IMR-90 (cell line): ENCODE measurements at regions of chr4 and their contacts with region 1.

Region 1: DNA sequence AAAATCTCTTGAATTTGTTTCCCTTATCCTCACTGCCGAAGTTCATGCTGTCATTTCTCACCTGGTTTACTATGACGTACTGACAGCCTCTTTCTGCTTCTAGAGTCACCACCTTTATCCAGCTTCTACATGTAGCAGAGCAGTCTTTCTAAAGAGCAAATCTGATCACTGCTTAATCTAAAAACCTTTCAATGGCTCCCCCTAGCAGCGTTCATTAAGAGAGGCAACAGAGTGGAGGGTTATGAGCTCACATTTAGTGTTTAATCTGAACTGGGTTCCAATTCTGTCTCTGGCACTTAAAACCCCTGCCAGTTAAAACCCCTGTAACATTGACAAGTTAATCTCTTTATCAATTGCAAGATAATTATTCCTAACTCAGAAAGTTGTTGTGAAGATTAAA is 4.4 kb downstream of the RBPJ start:
- DNase-seq: peak; percentile 67
- ATAC-seq: no peak
- H3K4me3 ChIP-seq: no peak overlapping the region
- H3K27ac ChIP-seq: no peak overlapping the region
- H3K4me1 ChIP-seq: peaks cover 9% of the 10 kb centered on the region
- H3K27me3 ChIP-seq: no peaks in the 10 kb centered on the region
- CTCF ChIP-seq: peak; percentile 61
- POLR2A ChIP-seq: no peak
- RAD21 ChIP-seq: peak; percentile 65

Region 2: DNA sequence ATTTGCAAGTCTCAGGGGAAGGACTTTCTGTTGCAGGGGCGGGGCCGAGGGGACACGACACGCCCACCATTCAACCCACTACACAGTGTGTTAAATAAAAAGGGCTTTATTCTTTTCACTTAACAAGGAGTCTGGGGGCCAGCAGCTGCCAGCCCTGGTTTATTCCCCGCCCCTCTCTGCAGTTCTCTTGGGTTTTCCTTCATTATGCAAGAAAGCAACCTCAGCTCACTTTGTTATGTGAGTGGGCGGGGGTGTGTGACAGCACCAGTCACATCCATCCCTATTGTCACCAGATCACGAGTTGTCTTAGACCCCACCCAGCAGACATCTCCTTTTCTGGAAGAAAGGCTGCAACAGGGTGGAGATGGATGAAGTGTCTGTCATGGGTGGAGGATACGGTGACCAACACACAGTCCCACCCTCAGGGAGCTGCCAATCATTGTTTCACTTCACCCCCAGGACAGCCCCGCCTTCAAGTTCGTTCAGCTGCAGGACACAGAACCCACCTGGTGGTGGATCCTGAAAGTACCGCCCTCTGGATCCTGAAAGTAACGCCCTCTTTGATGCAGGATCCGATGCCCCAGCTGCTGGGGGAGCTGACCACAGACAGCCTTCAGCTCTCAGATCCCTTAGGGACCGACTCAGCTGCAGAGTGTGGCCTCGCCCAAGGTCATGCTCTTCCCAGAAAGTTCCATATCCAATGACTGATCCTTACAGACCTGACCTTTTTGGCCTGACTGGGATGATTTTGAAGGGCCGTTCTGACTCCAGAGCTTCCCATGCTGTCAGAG is 331.6 kb before region 1 on chr4:
- CTCF ChIA-PET with region 1: no interaction called
- POLR2A ChIA-PET with region 1: no interaction called
- dilution Hi-C with region 1: no loop called
- in situ Hi-C with region 1: no loop called
- intact Hi-C with region 1: loop called (anchors 1 kb)
- DNase-seq: no peak
- ATAC-seq: no peak
- H3K4me3 ChIP-seq: no peak overlapping the region
- H3K27ac ChIP-seq: no peak overlapping the region
- H3K4me1 ChIP-seq: 0 out of 2 replicates have a peak, but pooled peaks cover 2% of the 10 kb centered on the region
- H3K27me3 ChIP-seq: no peaks in the 10 kb centered on the region
- CTCF ChIP-seq: 0 out of 2 replicates have a peak, but pooled peaks have one; percentile 8
- POLR2A ChIP-seq: no peak
- RAD21 ChIP-seq: no peak

Region 3: DNA sequence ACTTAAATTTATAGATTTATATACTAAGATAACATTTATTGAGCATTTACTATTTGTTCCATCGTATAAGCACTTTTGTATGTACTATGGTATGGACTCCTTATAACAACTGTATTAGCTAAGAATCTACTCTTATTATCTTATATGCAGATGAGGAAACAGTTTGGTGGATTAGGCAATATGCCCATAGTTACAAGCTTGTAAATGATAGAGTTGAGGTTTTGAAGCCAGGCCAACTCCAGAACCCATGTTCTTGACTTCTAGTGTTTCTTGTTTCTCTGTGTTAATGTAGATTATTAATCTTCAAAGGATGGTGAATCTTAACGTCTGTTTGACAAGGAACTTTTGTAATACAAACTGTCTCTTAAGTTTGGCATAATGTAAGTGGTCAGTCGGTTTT is 606.8 kb after region 1 on chr4:
- CTCF ChIA-PET with region 1: no interaction called
- POLR2A ChIA-PET with region 1: no interaction called
- dilution Hi-C with region 1: no loop called
- in situ Hi-C with region 1: no loop called
- intact Hi-C with region 1: no loop called
- DNase-seq: no peak
- ATAC-seq: no peak
- H3K4me3 ChIP-seq: no peak overlapping the region
- H3K27ac ChIP-seq: no peak overlapping the region
- H3K4me1 ChIP-seq: peaks cover 4% of the 10 kb centered on the region; the same call in 1 of the 2 replicates
- H3K27me3 ChIP-seq: no peaks in the 10 kb centered on the region
- CTCF ChIP-seq: no peak
- POLR2A ChIP-seq: no peak
- RAD21 ChIP-seq: no peak